ENCODE measurements at regions of chr11 and their contacts with region 1.

Region 1: GRCh38 chr11:122584670-122585069 is 70.9 kb upstream of the UBASH3B start:
- DNase-seq: no peak
- H3K4me3 ChIP-seq: no peak overlapping the region
- CTCF ChIP-seq: no peak
- POLR2A ChIP-seq: no peak

Region 2: DNA sequence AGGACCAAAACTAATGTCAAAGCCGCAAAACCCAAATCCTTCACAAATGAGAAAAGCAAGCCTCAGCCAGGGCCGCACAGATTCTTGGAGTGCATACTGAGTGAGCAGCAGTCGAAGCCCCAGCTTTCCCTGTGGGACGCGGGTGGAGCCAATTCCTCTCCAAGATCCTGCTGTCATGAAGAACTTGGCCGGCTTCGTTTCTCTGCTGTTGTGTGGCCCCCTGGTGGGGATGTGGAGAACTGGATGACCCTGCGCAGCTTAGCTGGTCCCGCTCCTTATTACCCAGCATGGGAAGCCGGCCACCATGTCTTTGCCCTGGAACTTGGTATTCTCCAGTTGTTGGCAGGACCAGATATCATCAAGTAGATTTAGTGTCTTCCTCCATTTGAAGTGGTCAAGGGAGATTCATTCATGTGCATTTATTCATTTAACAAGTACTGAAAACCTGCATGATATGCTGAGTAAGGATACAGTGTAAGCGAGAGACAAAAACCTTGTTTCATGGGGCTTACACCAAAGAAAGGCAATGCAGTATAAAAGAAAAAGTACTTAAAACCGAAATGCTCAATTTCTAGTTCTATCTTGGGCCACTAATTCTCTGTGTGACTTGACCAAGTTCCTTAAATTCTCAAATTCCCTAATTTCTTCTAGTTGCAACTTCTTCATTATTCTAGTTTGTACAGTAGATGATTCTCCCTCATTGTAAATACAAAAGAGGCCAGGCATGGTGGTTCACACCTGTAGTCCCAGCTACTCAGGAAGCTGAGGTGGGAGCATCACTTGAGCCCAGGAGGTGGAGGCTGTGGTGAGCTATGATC is 196.9 kb after region 1 on chr11:
- intact Hi-C with region 1: loop called (anchors 5 kb)
- DNase-seq: peak; percentile 86 to 97
- H3K4me3 ChIP-seq: no peak overlapping the region
- CTCF ChIP-seq: peak in 2 of 3 donors; percentile 26 to 67
- POLR2A ChIP-seq: no peak